Psoas muscle (tissue), 8 donors: ENCODE measurements at regions of chr7 and their contacts with region 1.

Region 1: GRCh38 chr7:143733876-143734275 is 23.6 kb downstream of the CTAGE6 start:
- DNase-seq: no peak
- ATAC-seq: no peak
- H3K4me3 ChIP-seq: no peak overlapping the region
- H3K27ac ChIP-seq: no peak overlapping the region
- H3K4me1 ChIP-seq: no peaks in the 10 kb centered on the region
- H3K27me3 ChIP-seq: no peaks in the 10 kb centered on the region
- CTCF ChIP-seq: no peak

Region 2: GRCh38 chr7:143331179-143331820 is 402.6 kb before region 1 on chr7:
- intact Hi-C with region 1: no loop called
- DNase-seq: peak in 1 of 2 donors; percentile 77
- ATAC-seq: peak; percentile 89 to 98 (median 94)
- H3K4me3 ChIP-seq: no peak overlapping the region
- H3K27ac ChIP-seq: peak overlapping the region; percentile 86
- H3K4me1 ChIP-seq: peaks cover 23% of the 10 kb centered on the region
- H3K27me3 ChIP-seq: no peaks in the 10 kb centered on the region
- CTCF ChIP-seq: no peak

Region 3: DNA sequence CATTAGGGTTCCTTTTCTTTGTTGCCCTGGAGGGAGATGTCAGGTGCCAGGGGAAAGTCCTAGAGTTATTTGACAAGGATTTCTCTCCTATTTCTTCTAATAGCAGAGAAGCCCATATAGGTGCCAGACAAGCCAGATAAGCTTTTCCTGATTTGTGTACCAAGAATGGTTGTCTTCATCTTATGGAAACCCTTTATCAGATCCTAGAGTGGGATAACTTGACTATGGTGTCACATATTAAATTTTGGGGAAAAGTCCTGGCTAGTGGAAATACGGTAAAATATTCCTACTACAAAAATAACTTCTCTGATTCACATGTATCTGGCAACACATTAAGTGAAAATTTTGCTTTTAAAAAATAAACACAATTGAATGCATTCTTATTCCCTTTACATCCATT is 353.4 kb after region 1 on chr7:
- intact Hi-C with region 1: no loop called
- DNase-seq: no peak
- ATAC-seq: no peak
- H3K4me3 ChIP-seq: no peak overlapping the region
- H3K27ac ChIP-seq: no peak overlapping the region
- H3K4me1 ChIP-seq: no peaks in the 10 kb centered on the region
- H3K27me3 ChIP-seq: no peaks in the 10 kb centered on the region
- CTCF ChIP-seq: no peak

Region 4: GRCh38 chr7:144127703-144128334 is 393.9 kb after region 1 on chr7:
- intact Hi-C with region 1: loop called in 1 of 2 experiments (anchors 5 kb)
- DNase-seq: peak; percentile 84 to 91
- ATAC-seq: peak; percentile 69 to 94 (median 84)
- H3K4me3 ChIP-seq: no peak overlapping the region
- H3K27ac ChIP-seq: no peak overlapping the region
- H3K4me1 ChIP-seq: no peaks in the 10 kb centered on the region
- H3K27me3 ChIP-seq: no peaks in the 10 kb centered on the region
- CTCF ChIP-seq: peak; percentile 74